ENCODE measurements at regions of chr10 and their contacts with region 1.

Region 1: DNA sequence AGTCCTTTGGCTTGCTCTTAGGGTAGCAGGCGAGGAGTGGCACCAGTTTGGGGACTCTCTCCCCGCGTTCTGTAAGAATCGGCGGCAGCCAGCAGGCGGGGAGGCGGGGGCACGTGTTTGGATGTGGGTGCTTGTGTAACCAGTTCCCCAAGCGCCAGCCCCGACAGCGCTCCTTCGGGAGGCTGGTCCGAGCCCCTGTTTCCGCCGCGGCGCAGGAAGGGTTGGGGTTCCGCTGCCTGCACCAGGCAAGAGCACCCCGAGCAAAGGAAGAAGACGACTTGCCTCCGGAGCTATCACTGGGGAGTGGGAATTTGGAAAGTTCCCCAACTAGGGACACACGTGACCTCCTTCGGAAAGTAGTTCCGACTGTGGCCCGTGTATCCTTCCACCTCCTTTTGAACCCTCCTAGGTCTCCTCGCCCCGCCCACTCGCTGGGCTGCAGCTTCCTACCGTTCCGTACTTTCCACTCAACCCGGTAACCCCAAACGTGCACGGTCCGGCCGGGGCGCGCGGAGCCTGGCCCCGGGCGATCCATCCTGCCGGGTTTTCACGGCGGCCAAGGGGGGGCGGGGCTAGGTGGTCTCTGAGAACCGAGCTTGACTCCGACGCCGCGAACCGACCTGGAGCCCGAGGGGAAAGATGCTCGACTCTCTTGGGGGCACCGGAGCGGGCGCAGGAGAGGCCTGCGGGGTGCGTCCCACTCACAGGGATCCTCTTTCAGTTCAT is 1.2 kb downstream of the KLLN start:
- DNase-seq: peak; percentile 95
- H3K4me3 Mint-ChIP-seq: peak overlapping the region; percentile 96
- H3K27ac Mint-ChIP-seq: peak overlapping the region; percentile 95
- H3K4me1 Mint-ChIP-seq: peaks cover 33% of the 10 kb centered on the region
- H3K27me3 Mint-ChIP-seq: peaks cover 3% of the 10 kb centered on the region

Region 2: GRCh38 chr10:87817609-87818504 is 44.3 kb before region 1 on chr10 and contains the start of gene ATAD1:
- CTCF ChIA-PET with region 1: interaction called, 6 read pairs
- intact Hi-C with region 1: loop called (anchors 1 kb)
- DNase-seq: peak; percentile 90
- H3K4me3 Mint-ChIP-seq: peak within 1 kb of the TSS; percentile 87
- H3K27ac Mint-ChIP-seq: peak within 1 kb of the TSS; percentile 94
- H3K4me1 Mint-ChIP-seq: peaks cover 28% of the 10 kb centered on the region
- H3K27me3 Mint-ChIP-seq: no peaks in the 10 kb centered on the region
- total RNA-seq, gene ATAD1: 47.4 to 53.7 TPM

Region 3: GRCh38 chr10:87931836-87932230 is 69.7 kb after region 1 on chr10:
- CTCF ChIA-PET with region 1: no interaction called
- intact Hi-C with region 1: loop called (anchors 2 kb)
- DNase-seq: no peak
- H3K4me3 Mint-ChIP-seq: no peak overlapping the region
- H3K27ac Mint-ChIP-seq: no peak overlapping the region
- H3K4me1 Mint-ChIP-seq: peaks cover 46% of the 10 kb centered on the region
- H3K27me3 Mint-ChIP-seq: no peaks in the 10 kb centered on the region

Region 4: DNA sequence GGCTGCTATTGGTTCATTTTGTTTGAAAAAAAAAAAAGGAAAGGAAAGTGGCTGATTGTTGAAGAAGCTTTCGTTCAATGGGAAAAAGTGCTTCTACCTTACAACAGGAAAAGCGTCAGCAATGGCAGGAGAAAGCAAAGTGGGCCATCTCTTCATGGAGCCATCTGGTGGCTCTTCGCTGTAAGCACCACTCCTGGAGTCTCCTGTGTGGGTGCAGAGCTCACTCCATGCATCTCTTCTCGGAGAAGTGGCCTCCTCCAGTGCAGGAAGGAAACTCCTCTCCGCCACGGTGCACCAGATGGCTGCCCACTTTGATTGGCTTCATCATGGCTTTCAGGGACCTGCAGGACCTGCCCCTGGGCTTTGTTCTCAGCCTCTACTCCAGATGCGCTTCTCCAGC is 252.3 kb after region 1 on chr10:
- CTCF ChIA-PET with region 1: interaction called, 18 read pairs
- intact Hi-C with region 1: loop called (anchors 1 kb)
- DNase-seq: peak; percentile 45
- H3K4me3 Mint-ChIP-seq: no peak overlapping the region
- H3K27ac Mint-ChIP-seq: no peak overlapping the region
- H3K4me1 Mint-ChIP-seq: peaks cover 8% of the 10 kb centered on the region
- H3K27me3 Mint-ChIP-seq: peaks cover 10% of the 10 kb centered on the region

Region 5: GRCh38 chr10:88409236-88409635 is 547.1 kb after region 1 on chr10:
- CTCF ChIA-PET with region 1: no interaction called
- intact Hi-C with region 1: loop called (anchors 5 kb)
- DNase-seq: no peak
- H3K4me3 Mint-ChIP-seq: no peak overlapping the region
- H3K27ac Mint-ChIP-seq: no peak overlapping the region
- H3K4me1 Mint-ChIP-seq: peaks cover 8% of the 10 kb centered on the region
- H3K27me3 Mint-ChIP-seq: no peaks in the 10 kb centered on the region

Region 6: GRCh38 chr10:88828310-88828709 is 966.2 kb after region 1 on chr10:
- CTCF ChIA-PET with region 1: no interaction called
- intact Hi-C with region 1: loop called (anchors 5 kb)
- DNase-seq: no peak
- H3K4me3 Mint-ChIP-seq: no peak overlapping the region
- H3K27ac Mint-ChIP-seq: no peak overlapping the region
- H3K4me1 Mint-ChIP-seq: peaks cover 47% of the 10 kb centered on the region
- H3K27me3 Mint-ChIP-seq: no peaks in the 10 kb centered on the region

Measured in activated naive CD4-positive, alpha-beta T cell treated with anti-CD3 and anti-CD28 coated beads for 36 hours (primary cell).